ENCODE measurements at regions of chr16 and their contacts with region 1.

Region 1: DNA sequence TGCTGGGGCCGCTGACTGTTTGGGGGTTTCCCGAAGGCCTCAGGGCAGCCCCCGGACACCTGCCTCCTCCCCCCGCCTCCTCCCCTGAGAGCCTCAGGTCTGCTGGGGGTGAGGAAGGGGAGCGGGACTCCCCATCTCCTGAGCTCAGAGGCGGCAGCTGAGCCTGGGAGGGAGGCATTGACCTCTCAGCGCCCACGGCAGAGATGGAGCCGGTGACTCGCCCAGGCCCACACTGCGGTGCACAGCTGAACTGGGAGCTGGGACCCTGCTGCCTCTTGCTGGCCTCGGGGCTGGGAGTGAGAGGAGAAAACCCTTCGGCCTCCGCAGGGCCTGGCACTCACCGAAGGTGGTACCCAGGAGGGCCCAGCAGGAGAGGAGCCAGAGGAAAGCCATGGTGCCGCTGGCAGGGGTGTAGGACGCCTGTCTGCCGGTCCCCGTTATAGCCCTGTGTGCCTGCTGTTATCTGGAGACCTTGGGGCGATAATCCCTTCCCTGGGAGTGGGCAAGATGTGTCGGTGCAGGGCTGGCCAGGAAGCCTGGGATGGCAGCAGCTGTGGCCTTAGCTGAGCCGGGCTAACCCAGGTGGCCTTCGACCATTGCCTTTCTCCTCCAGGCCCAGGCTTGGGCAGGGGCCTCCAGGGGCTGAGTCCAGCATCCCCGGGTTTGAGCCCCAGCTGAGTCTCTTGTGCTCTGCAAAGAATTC is at the start of gene CTRB2:
- DNase-seq: no peak
- ATAC-seq: no peak
- total RNA-seq, gene CTRB2: not detected

Region 2: GRCh38 chr16:75224306-75225091 is 17.6 kb after region 1 on chr16:
- intact Hi-C with region 1: loop called (anchors 2 kb)
- DNase-seq: peak; percentile 43
- ATAC-seq: no peak

Measured in Right ventricle myocardium inferior (tissue), 1 donor.